ENCODE measurements at regions of chr1 and their contacts with region 1.

Region 1: GRCh38 chr1:229661022-229661877 is 35.2 kb downstream of the URB2 start:
- DNase-seq: peak; percentile 93

Region 2: DNA sequence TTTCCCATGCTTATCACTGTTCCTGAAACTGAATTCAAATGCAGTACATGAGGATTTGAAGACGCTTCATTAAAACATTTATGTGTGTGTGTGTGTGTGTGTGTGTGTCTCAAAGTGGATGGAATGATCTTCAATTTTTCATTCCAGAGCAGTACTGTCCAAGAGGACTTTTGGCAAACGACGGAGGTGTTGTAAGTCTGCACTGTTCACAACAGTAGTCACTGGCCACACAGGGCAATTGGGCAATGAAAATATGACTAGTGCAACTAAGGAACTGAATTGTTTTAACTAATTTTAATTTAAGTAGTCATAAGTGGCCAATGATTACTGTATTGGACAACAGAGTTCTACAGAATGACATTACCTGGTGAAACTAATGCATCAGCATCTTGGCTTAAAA is 40.4 kb before region 1 on chr1:
- intact Hi-C with region 1: no loop called
- DNase-seq: no peak

Region 3: DNA sequence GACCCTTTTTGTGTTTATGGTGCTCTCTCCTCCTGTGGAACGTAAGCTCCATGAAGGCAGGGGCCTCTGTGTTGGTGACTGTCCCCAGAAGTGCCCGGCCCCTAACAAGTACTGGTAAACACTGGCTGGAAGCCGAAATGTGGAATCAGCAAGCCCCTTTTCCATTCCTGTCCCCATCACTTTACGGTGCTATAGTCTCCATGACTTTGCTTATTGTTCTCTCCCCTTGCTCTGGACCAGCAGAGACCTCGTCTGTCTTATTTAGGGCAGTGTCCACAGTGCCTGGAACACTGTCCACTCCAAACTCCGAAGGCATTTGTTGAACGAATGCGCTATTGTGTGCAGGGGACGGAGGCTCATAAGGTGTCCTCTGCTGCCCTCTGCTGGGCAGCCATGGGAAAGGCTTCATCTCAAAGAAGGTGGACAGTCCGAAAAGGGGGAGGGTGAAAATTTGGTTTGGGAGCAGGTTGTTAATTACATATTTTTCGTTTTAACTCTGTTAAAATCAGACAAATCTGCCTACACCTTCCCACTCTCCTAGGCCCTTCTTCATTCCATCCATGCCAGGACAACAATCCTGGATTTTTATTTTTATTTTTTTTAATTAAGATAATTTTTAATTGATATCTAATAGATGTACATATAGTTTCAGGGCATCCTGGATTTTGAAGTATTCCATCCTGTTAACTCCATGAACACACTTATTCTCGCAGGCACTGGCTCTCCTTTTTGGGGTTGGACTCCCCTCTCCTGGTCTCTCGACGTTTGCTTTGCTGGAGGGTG is 649.3 kb after region 1 on chr1:
- intact Hi-C with region 1: loop called (anchors 5 kb)
- DNase-seq: peak; percentile 92